Posterior vena cava (tissue), 2 donors: ENCODE measurements at regions of chr6 and their contacts with region 1.

Region 1: GRCh38 chr6:19399406-19399805 is 437.8 kb upstream of the ID4 start:
- DNase-seq: no peak

Region 2: GRCh38 chr6:18491308-18492045 is 907.9 kb before region 1 on chr6:
- intact Hi-C with region 1: loop called in 1 of 2 experiments (anchors 5 kb)
- DNase-seq: no peak

Region 3: GRCh38 chr6:19771753-19772336 is 372.4 kb after region 1 on chr6:
- intact Hi-C with region 1: no loop called
- DNase-seq: no peak